RWPE1 (cell line): ENCODE measurements at regions of chr9 and their contacts with region 1.

Region 1: GRCh38 chr9:107760454-107761237 is 271.1 kb upstream of the KLF4 start:
- DNase-seq: no peak
- H3K27ac ChIP-seq: no peak overlapping the region
- CTCF ChIP-seq: no peak

Region 2: DNA sequence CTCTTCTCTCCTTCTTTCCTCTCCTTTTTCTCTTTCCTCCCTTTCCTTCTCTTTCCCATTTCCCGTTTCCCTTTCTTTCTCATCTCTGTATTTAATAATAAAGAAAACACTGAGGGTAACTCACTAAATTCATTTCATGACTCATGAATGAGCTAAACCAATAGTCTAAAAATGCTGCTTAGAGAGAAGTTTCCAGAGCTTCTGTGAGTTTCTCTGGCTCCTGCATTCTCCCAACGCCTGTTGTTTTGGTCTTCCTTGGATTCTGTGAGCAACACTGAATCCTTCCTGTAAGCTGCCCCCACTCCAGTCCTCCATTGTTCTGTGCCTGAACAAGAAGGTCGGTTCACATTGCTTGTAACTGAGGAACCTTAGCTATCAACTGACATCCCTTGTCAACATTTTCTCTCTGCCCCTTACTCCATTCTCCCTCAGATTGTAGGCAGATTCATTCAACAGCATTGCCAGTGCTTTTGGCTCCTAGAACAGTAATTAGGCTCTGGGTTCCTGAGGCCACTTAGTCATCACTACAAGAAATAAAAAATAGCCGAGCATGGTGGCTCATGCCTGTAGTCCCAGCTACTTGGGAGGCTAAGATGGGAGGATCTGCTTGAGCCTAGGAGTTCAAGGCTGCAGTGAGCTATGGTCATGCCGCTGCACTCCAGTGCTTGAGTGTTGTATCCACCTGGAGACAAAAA is 33.4 kb before region 1 on chr9:
- CTCF ChIA-PET with region 1: no interaction called
- POLR2A ChIA-PET with region 1: no interaction called
- DNase-seq: no peak
- H3K27ac ChIP-seq: no peak overlapping the region
- CTCF ChIP-seq: no peak

Region 3: DNA sequence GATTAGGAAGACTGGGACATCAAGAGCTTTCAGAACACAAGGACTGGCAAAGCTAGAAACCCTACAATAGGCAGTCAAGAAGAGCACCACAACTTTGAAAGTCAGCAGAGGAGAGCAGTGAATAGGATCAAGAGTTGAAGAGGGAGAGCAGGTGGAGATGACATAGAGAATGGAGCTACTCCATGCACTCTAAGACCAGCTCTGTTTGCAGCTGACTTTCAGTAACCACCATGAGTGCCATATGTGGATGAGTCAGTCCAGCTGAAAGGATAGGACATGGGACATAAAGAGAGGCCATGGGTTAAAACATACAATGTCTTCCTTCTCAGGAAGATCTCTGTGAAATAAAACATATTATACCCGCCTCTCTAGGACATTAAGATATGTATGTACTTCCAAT is 18.0 kb after region 1 on chr9:
- CTCF ChIA-PET with region 1: no interaction called
- POLR2A ChIA-PET with region 1: no interaction called
- DNase-seq: no peak
- H3K27ac ChIP-seq: no peak overlapping the region
- CTCF ChIP-seq: no peak

Region 4: GRCh38 chr9:107809871-107810460 is 49.3 kb after region 1 on chr9:
- CTCF ChIA-PET with region 1: no interaction called
- POLR2A ChIA-PET with region 1: no interaction called
- DNase-seq: peak; percentile 87
- H3K27ac ChIP-seq: no peak overlapping the region
- CTCF ChIP-seq: no peak

Region 5: GRCh38 chr9:107983181-107983603 is 222.5 kb after region 1 on chr9:
- CTCF ChIA-PET with region 1: no interaction called
- POLR2A ChIA-PET with region 1: interaction called, 11 read pairs
- DNase-seq: peak; percentile 25
- H3K27ac ChIP-seq: no peak overlapping the region
- CTCF ChIP-seq: no peak

Region 6: DNA sequence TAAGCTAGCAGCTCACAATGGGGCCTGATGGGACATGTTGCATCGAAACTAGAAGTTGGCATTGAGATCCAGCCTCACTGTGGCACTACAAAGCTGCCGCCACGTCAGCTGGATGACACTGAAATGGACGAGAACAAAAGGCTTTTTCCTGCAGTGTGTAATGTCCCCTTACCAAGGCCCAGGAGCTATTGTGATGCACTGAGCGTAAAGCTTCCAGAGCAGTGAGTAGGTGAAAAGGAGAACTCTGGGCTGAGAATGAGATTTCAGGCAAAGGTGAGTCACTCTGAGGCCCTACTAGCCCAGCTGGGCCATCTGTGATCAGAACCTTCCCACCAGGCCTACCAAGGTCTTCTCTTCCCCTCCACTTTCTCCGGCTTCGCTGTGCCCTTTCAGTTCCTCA is 257.0 kb after region 1 on chr9:
- CTCF ChIA-PET with region 1: no interaction called
- POLR2A ChIA-PET with region 1: no interaction called
- DNase-seq: peak; percentile 24
- H3K27ac ChIP-seq: no peak overlapping the region
- CTCF ChIP-seq: no peak